WTC11 (cell line): ENCODE measurements at regions of chr15 and their contacts with region 1.

Region 1: DNA sequence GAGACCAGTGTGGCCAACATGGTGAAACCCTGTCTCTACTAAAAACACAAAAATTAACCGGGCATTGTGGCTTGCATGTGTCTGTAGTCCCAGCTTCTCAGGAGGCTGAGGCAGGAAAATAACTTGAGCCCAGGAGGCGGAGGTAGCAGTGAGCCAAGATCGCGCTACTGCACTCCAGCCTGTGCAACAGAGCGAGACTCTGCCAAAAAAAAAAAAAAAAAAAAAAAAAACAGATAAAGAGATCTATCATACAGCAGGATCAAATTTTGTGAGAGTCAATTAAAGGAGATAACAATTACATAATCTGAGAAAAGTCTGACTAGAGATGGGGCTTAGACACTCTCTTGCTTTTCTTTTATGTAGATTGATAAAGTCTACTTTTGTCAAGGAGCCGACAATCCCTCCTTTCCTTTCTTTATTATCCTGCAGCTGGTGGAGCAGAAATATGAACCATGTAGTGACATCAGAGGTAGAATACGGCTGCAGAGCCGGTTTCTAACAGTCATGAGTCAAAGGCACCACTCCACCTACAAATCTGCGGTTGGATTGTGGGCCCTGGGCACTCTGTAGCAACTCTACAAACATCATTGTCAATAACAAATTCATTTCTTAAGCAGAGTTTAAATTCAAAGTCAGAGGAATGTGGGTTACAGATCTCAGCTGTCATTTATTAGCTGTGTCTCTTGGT is 9.0 kb downstream of the C2CD4A start:
- DNase-seq: no peak
- ATAC-seq: no peak
- H3K4me3 Mint-ChIP-seq: no peak overlapping the region
- H3K27ac Mint-ChIP-seq: no peak overlapping the region
- H3K4me1 Mint-ChIP-seq: no peaks in the 10 kb centered on the region
- H3K27me3 Mint-ChIP-seq: peaks cover 1% of the 10 kb centered on the region; the same call in 1 of the 2 replicates
- CTCF ChIP-seq: no peak

Region 2: DNA sequence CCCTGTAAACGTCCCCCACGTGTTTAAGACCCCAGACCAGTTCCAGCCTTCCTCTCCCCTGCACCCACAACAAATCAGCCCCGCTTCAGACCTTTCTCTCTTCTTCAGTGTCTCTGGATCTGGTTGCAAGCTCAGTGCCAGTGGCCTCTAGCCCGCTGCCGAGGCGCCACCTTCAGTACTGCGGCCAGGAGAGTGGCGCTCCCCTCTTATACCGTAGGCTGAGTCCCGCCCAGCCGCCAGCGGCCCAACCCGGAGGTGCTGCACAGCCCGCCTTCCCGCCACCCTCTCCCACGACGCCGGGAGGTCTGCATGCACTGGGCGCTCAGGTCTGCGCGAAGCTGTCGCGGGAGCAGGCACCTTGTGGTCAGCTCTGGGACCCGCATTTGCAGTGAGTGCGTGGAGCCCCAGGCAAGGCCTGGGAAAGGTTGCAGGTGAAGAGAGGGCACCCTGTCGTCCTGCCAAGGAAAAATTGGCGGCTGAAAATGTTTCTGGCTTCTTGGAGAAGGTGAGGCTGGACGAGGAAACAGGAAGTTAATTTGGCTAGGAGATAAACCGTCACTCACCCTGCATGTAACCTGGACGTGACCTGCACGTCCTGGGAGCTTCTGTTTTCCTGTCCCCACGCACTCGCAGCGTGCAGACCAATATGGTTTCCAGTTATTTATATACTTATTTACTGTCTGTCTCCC is 89.5 kb after region 1 on chr15 and contains the start of gene C2CD4B:
- CTCF ChIA-PET with region 1: no interaction called
- POLR2A ChIA-PET with region 1: interaction called, 11 read pairs
- DNase-seq: peak; percentile 70
- ATAC-seq: peak; percentile 84
- H3K4me3 Mint-ChIP-seq: peak within 1 kb of the TSS; percentile 82
- H3K27ac Mint-ChIP-seq: no peak within 1 kb of the TSS
- H3K4me1 Mint-ChIP-seq: peaks cover 19% of the 10 kb centered on the region
- H3K27me3 Mint-ChIP-seq: peaks cover 70% of the 10 kb centered on the region
- CTCF ChIP-seq: no peak
- total RNA-seq, gene C2CD4B: 0.82 to 1.3 TPM (median 0.96 TPM) in 3 replicates

Region 3: GRCh38 chr15:62287066-62287857 is 211.5 kb after region 1 on chr15:
- CTCF ChIA-PET with region 1: no interaction called
- POLR2A ChIA-PET with region 1: no interaction called
- DNase-seq: no peak
- ATAC-seq: no peak
- H3K4me3 Mint-ChIP-seq: no peak overlapping the region
- H3K27ac Mint-ChIP-seq: peak overlapping the region; percentile 40; the same call in 1 of the 2 replicates
- H3K4me1 Mint-ChIP-seq: peaks cover 40% of the 10 kb centered on the region
- H3K27me3 Mint-ChIP-seq: no peaks in the 10 kb centered on the region
- CTCF ChIP-seq: no peak